Activated CD4-positive, alpha-beta memory T cell treated with anti-CD3 and anti-CD28 coated beads, Interleukin-2, amount 10 ng/mL, durations not matched to agents 7 days and 5 days (primary cell): ENCODE measurements at regions of chr20 and their contacts with region 1.

Region 1: DNA sequence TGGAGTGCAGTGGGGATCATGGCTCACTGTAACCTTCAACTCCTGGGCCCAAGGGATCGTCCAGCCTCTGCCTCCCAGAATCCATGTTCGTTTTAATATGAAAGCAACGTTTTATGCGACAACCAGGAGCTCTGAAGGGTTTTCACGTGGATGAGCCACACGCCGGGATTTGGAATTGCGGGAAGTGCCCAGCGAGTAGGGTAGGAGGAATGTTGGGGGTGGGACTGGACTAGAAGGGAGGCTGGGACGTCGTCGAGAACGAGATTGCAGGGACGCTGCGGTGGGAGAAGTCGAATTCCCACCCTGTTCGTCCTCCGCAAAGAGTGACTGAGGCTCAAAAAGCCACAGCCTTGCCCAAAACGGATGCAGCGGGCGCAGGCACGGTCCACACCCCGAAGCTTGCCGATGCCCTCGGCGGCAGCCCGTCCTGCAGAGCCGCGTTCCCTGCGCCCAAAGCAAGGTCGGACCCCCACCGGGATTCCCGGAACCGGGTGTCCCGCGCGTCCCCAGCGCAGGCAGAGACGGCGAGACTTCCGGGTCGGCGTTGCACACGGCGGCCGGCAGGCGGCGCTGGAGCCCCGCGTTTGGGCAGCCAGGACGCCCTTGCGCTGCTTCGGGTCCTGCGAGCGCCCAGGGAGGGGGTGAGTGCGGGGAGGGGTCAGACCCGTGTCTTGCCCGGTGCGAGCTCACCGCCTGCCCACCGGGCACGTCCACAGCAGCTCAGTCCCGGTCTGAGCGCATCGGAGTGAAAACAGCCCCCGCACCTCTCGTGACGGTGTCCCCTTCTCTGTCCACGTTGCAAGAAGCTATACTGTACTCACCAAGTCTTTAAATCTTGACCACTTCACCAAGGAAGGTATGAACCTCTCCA is 87.8 kb downstream of the DHX35 start:
- DNase-seq: peak; percentile 78
- H3K4me3 Mint-ChIP-seq: peak overlapping the region; percentile 76
- H3K27ac Mint-ChIP-seq: peak overlapping the region; percentile 49
- H3K4me1 Mint-ChIP-seq: peaks cover 15% of the 10 kb centered on the region
- H3K27me3 Mint-ChIP-seq: peaks cover 8% of the 10 kb centered on the region

Region 2: DNA sequence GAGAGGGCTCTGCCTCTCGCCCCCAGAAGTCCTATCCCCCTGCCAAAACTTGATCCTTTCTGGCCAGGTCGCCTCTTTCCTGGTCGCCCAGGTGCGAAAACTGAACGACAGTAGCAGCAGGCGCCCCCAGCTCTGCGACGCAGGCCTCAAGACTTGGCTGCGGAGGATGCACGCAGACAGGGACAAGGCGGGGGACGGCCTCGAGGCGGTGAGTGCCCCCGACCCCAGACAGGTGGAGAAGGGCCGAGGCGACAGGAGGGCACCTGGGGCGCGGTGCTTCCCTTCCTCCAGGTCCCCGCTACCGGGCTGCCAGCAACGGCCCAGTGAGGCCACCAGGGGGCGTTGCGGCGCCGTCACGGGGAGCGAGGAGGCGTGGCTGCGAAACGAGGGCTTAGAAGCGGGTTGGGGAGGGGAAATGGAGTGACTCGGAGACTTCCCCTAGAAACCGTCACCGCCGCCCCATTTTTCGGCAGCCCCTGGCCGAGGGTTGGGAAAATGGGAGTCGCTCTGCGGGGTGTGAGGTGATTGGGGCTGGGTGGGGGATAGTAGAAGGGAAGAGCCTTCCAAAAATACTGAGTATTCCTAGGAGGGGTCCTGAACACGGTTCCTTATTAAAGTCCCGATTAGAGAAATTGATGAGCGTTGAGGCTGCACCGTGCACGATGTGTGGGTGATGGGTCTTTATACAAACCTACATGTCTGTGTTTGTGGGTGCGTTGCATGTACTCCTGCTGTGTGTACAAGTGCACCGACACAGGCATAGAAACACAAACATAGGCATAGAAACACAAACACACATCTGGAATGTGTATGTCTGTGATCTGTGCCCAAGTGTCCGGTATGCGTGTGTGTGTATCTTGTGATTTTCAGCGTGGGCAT is 403.7 kb before region 1 on chr20:
- CTCF ChIA-PET with region 1: interaction called, 12 read pairs
- POLR2A ChIA-PET with region 1: interaction called, 3 read pairs
- DNase-seq: peak; percentile 92
- H3K4me3 Mint-ChIP-seq: peak overlapping the region; percentile 67
- H3K27ac Mint-ChIP-seq: no peak overlapping the region
- H3K4me1 Mint-ChIP-seq: peaks cover 7% of the 10 kb centered on the region
- H3K27me3 Mint-ChIP-seq: peaks cover 57% of the 10 kb centered on the region

Region 3: DNA sequence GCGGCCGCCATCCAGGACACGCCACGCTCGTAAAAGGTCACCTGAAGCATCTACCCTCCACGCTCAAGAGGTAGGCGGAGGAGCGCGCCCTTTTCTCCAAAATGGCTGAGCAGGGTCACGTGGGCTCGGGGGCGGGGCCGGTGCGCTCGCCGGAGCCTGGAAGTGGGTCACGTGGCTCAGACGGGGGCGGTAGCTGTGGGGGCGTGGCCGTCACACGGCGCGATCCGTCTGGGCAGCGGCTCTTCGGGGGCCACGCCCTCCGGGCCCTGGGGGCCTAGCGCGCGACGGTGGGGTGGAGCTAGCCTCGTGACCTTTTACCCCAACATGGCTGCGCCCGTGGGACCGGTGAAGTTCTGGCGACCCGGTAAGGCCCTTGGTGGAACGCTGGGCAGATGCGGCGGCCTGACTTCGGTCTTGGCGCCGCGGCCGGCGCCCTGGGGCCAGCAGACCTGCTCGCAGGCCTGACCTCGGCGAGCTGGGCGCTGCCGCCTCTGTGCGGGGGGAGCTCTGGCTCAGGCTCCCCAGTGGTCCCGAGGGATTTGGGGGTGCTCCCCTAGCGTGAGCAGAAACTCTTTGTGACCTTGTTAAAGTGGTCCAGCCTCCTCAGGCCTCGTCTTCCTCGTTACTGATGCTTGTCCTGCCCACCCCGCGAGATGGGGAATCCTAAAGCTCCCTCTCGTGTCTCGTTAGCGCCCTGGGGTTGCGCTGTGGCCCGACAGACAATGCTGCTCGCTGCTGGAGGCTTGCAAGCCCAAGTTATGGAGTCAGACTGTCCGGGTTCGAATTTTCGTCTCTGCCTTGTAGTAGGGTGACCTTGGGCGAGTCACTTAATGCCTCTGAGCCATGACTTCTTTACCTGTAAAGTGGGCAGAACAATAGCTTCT is 87.6 kb before region 1 on chr20 and contains the start of gene DHX35:
- CTCF ChIA-PET with region 1: interaction called, 63 read pairs
- POLR2A ChIA-PET with region 1: interaction called, 10 read pairs
- DNase-seq: peak; percentile 99
- H3K4me3 Mint-ChIP-seq: peak within 1 kb of the TSS; percentile 88
- H3K27ac Mint-ChIP-seq: peak within 1 kb of the TSS; percentile 80
- H3K4me1 Mint-ChIP-seq: peaks cover 31% of the 10 kb centered on the region
- H3K27me3 Mint-ChIP-seq: no peaks in the 10 kb centered on the region
- total RNA-seq, gene DHX35: 7.1 to 7.2 TPM

Region 4: GRCh38 chr20:39019805-39020325 is 30.1 kb before region 1 on chr20:
- CTCF ChIA-PET with region 1: interaction called, 10 read pairs
- POLR2A ChIA-PET with region 1: no interaction called
- DNase-seq: no peak
- H3K4me3 Mint-ChIP-seq: no peak overlapping the region
- H3K27ac Mint-ChIP-seq: no peak overlapping the region
- H3K4me1 Mint-ChIP-seq: peaks cover 75% of the 10 kb centered on the region
- H3K27me3 Mint-ChIP-seq: no peaks in the 10 kb centered on the region

Region 5: DNA sequence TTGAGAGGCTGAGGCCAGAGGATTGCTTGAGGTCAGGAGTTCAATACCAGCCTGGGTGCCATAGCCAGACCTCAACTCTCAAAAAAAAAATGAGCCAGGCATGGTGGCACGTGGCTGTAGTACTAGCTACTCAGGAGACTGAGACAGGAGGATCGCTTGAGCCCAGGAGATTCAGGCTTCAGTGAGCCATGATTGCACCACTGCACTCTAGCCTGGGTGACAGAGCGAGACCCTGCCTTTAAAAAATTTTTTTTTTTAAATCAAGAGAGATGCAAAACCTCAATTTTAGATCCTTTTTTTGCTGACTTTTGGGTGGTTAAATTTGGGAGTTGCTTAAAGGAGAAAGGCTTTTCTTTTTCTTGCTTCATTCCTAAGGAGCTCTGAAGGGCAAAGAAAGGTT is 16.9 kb before region 1 on chr20:
- CTCF ChIA-PET with region 1: interaction called, 27 read pairs
- POLR2A ChIA-PET with region 1: no interaction called
- DNase-seq: no peak
- H3K4me3 Mint-ChIP-seq: no peak overlapping the region
- H3K27ac Mint-ChIP-seq: no peak overlapping the region
- H3K4me1 Mint-ChIP-seq: no peaks in the 10 kb centered on the region
- H3K27me3 Mint-ChIP-seq: no peaks in the 10 kb centered on the region

Region 6: DNA sequence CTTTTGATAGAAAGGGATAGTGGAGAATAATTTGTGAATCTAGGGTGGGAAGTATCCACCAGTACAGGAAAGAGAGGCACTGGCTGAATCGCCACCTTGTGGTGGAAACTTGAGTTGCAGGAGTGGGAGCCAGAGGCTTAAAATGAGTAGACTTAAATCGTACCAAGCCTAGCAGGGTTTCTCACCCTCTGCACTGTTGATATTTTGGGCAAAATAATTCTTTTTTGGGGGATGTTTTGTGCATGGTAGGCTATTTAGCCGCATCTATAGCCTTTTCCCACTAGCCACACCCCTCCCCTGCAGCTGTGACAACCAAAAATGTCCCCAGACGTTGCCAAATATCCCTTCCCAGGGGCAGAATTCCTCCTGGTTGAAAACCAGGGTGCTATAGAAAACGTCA is 31.3 kb after region 1 on chr20:
- CTCF ChIA-PET with region 1: interaction called, 94 read pairs
- POLR2A ChIA-PET with region 1: interaction called, 5 read pairs
- DNase-seq: peak; percentile 82
- H3K4me3 Mint-ChIP-seq: no peak overlapping the region
- H3K27ac Mint-ChIP-seq: no peak overlapping the region
- H3K4me1 Mint-ChIP-seq: peaks cover 6% of the 10 kb centered on the region
- H3K27me3 Mint-ChIP-seq: peaks cover 25% of the 10 kb centered on the region